ENCODE measurements at regions of chr12 and their contacts with region 1.

Region 1: DNA sequence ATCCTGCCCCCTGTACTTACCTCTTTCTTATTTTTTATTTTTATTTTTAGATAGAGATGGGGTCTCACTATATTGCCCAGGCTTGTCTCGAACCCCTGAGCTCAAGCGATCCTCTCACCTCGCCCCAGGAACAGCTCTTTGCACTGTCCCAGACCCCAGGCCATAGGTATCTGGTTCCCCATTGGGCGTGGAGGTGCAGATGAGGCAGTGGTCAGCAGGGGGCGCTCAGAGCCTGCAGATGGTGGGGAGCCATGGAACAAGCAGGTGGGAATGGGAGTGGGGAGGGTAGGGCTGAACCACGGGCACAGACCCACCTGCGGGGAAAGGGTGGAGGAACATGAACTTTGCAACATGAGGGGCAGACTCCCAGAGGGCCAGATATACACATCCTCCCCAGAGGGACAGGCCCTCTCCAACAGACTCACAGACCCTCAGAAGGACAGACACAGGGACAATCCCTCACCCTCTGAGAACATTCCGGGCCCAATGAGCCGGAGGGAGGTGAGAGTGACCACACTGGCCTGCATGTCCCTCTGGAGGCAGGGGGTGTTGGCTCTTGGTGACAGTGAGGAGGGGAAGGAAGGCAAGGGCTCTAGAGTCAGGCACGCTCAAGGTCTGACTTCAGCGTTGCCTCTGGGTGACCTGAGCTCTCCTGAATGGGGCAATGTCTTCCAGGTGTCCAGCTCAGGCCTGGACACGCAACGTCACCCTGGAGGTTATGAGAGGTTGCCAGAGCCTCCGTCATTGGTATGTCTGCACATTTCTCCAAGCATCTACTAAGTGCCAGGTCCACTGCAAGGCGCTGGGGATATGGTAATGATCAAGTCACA is 34.9 kb downstream of the KRT80 start:
- DNase-seq: peak; percentile 56
- ATAC-seq: peak; percentile 69
- H3K4me3 Mint-ChIP-seq: no peak overlapping the region
- H3K27ac Mint-ChIP-seq: no peak overlapping the region
- H3K4me1 Mint-ChIP-seq: no peaks in the 10 kb centered on the region
- H3K27me3 Mint-ChIP-seq: peaks cover 14% of the 10 kb centered on the region
- CTCF ChIP-seq: no peak

Region 2: GRCh38 chr12:52126605-52127578 is 30.1 kb before region 1 on chr12:
- CTCF ChIA-PET with region 1: no interaction called
- POLR2A ChIA-PET with region 1: no interaction called
- intact Hi-C with region 1: no loop called
- DNase-seq: no peak
- ATAC-seq: no peak
- H3K4me3 Mint-ChIP-seq: no peak overlapping the region
- H3K27ac Mint-ChIP-seq: no peak overlapping the region
- H3K4me1 Mint-ChIP-seq: peaks cover 7% of the 10 kb centered on the region
- H3K27me3 Mint-ChIP-seq: peaks cover 19% of the 10 kb centered on the region
- CTCF ChIP-seq: no peak

Region 3: DNA sequence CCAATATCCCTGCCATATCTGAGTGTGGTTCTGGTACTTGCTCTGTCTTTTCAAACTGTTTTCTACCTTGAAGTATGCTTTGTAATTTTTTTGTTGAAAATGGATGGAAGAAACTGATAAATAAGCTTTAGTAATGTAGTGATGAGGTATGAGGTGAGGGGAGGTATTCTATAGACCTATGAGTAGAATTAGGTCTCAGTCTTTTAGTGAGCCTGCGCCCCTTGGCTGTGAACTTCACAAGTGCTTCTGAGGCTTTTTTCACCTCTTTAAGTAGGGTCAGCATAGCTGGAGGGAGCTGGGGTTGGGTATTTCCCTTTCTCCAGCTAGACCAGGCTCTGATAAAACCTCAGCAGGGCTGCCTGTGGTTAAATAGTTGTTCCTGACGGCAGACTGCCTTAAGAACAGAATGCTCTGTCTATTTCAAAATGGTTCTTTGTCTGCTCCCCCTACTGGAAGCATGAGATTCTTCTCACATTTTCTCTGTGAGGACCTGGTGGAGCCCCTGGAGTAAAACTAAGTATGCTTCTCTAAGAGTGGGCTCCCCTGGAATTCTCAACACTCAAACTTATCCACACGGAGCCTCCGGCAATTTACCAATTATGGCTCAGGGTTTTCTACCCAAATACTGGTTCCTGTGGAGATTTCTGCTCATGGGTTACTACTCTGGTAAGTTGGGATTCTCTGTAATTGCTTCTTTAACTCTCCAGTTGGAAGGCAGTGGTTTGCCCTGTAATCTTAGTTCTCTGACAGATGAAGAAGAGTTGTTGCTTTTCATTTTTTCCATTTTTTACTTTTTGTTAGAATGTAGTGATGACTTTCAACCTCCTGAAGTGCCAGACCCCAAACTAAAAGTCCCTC is 350.1 kb after region 1 on chr12:
- CTCF ChIA-PET with region 1: no interaction called
- POLR2A ChIA-PET with region 1: no interaction called
- intact Hi-C with region 1: loop called (anchors 10 kb)
- DNase-seq: no peak
- ATAC-seq: no peak
- H3K4me3 Mint-ChIP-seq: no peak overlapping the region
- H3K27ac Mint-ChIP-seq: no peak overlapping the region
- H3K4me1 Mint-ChIP-seq: no peaks in the 10 kb centered on the region
- H3K27me3 Mint-ChIP-seq: peaks cover 35% of the 10 kb centered on the region
- CTCF ChIP-seq: no peak